ENCODE measurements at regions of chr12 and their contacts with region 1.

Region 1: DNA sequence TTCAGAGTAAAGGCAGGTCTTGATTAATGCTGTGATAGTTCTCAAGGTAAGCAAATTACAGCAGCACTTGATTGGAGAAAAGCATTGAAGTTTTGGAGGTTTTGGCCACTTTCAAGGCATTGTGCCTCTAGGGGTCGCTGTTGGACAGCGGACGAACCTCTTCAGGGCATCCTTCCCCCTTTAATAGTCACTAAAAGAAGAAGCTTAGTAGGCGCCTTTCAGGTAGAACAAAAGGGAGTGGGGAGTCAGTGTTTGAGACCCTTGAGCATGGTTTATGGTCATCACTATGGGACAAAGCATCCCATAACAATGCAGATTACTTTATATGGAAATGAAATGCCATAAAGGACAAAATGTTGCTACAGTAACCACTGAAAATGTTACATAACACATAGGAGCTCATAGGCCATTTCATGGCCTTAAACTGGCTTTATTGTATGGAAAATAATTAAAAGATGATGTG is 199.5 kb upstream of the DCN start:
- DNase-seq: peak; percentile 90
- ATAC-seq: peak; percentile 84
- H3K4me3 ChIP-seq: peak overlapping the region; percentile 49
- H3K27ac ChIP-seq: 0 out of 2 replicates have a peak overlapping the region, but pooled peaks have one; percentile 6
- H3K4me1 ChIP-seq: peaks cover 6% of the 10 kb centered on the region; the same call in 1 of the 2 replicates
- H3K27me3 ChIP-seq: no peaks in the 10 kb centered on the region
- CTCF ChIP-seq: peak; percentile 94

Region 2: DNA sequence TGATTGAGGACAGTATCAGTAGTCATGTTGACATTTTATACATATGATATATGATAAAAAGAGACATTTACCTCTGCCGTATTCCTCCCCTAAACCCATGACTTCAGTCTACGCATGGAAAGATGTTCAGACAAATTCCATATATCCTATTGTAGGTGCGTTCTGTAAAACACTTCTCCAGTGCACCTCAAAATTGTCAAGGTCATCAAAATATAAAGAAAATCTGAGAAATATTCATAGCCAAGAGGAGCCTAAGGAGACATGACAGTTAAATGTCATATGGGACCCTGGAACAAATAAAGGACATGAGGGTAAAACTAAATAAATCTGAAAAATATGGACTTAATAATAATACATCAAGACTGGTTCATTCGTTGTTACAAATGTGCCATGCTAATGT is 498.7 kb before region 1 on chr12:
- CTCF ChIA-PET with region 1: no interaction called
- POLR2A ChIA-PET with region 1: no interaction called
- intact Hi-C with region 1: no loop called
- DNase-seq: no peak
- ATAC-seq: no peak
- H3K4me3 ChIP-seq: no peak overlapping the region
- H3K27ac ChIP-seq: no peak overlapping the region
- H3K4me1 ChIP-seq: no peaks in the 10 kb centered on the region
- H3K27me3 ChIP-seq: no peaks in the 10 kb centered on the region
- CTCF ChIP-seq: no peak

Region 3: GRCh38 chr12:91695951-91696350 is 313.8 kb after region 1 on chr12:
- CTCF ChIA-PET with region 1: interaction called, 3 read pairs
- POLR2A ChIA-PET with region 1: no interaction called
- intact Hi-C with region 1: loop called (anchors 10 kb)
- DNase-seq: no peak
- ATAC-seq: no peak
- H3K4me3 ChIP-seq: no peak overlapping the region
- H3K27ac ChIP-seq: no peak overlapping the region
- H3K4me1 ChIP-seq: no peaks in the 10 kb centered on the region
- H3K27me3 ChIP-seq: no peaks in the 10 kb centered on the region
- CTCF ChIP-seq: peak; percentile 41; the same call in 1 of the 2 replicates

Region 4: GRCh38 chr12:91811481-91812287 is 429.6 kb after region 1 on chr12:
- CTCF ChIA-PET with region 1: interaction called, 5 read pairs
- POLR2A ChIA-PET with region 1: no interaction called
- intact Hi-C with region 1: loop called (anchors 2 kb)
- DNase-seq: peak; percentile 72
- ATAC-seq: peak; percentile 53
- H3K4me3 ChIP-seq: no peak overlapping the region
- H3K27ac ChIP-seq: no peak overlapping the region
- H3K4me1 ChIP-seq: no peaks in the 10 kb centered on the region
- H3K27me3 ChIP-seq: no peaks in the 10 kb centered on the region
- CTCF ChIP-seq: peak; percentile 93

Region 5: GRCh38 chr12:91958816-91959215 is 576.7 kb after region 1 on chr12:
- CTCF ChIA-PET with region 1: no interaction called
- POLR2A ChIA-PET with region 1: no interaction called
- intact Hi-C with region 1: loop called (anchors 10 kb)
- DNase-seq: peak; percentile 51
- ATAC-seq: no peak
- H3K4me3 ChIP-seq: no peak overlapping the region
- H3K27ac ChIP-seq: no peak overlapping the region
- H3K4me1 ChIP-seq: peaks cover 9% of the 10 kb centered on the region; the same call in 1 of the 2 replicates
- H3K27me3 ChIP-seq: no peaks in the 10 kb centered on the region
- CTCF ChIP-seq: no peak

Region 6: DNA sequence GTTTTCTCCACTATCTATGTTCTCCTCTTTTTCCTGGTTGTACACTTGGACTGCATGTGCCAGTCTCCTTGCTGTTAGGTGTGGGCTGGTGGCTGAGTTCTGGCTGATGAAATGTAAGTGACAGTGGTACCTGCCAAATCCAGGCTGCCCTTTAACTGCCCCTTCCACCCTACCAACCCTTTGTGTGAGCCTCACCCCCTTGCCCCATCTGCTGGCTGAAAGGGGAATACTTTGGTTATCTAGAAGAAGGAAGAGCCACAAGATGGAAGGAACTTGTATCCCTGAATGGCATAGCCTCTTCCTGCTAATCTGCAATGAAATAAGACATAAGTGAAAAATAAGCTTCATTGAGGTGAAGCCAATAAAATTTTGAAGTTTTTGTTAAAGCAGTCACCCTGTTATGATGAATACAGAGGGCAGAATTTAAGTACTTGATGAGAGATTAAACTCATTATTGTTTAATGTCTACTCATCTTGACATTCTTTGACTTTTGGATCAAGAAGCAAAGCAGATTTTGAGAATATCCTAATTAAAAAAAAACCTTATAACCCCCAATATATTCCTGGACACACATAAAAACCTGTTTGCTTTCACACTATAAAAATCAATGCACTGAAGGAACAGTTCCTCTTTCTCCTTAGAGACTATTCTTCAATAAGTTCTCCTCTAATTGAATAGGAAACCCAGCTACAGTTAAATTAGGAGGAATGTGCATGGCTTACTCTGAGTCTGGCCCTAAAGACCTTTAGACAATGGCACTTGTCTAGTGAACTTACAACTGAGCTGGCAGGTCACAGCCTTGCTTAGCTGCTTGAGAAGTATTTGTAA is 1026.2 kb after region 1 on chr12:
- CTCF ChIA-PET with region 1: interaction called, 4 read pairs
- POLR2A ChIA-PET with region 1: no interaction called
- intact Hi-C with region 1: loop called (anchors 2 kb)
- DNase-seq: peak; percentile 76
- ATAC-seq: peak; percentile 71
- H3K4me3 ChIP-seq: no peak overlapping the region
- H3K27ac ChIP-seq: no peak overlapping the region
- H3K4me1 ChIP-seq: no peaks in the 10 kb centered on the region
- H3K27me3 ChIP-seq: no peaks in the 10 kb centered on the region
- CTCF ChIP-seq: peak; percentile 87

Region 7: GRCh38 chr12:92649511-92650227 is 1267.6 kb after region 1 on chr12:
- CTCF ChIA-PET with region 1: no interaction called
- POLR2A ChIA-PET with region 1: no interaction called
- intact Hi-C with region 1: loop called (anchors 5 kb)
- DNase-seq: peak; percentile 85
- ATAC-seq: peak; percentile 98
- H3K4me3 ChIP-seq: no peak overlapping the region
- H3K27ac ChIP-seq: no peak overlapping the region
- H3K4me1 ChIP-seq: peaks cover 27% of the 10 kb centered on the region
- H3K27me3 ChIP-seq: no peaks in the 10 kb centered on the region
- CTCF ChIP-seq: peak; percentile 91

Measured in PC-3 (cell line).